HEK293T (cell line): ENCODE measurements at regions of chr10 and their contacts with region 1.

Region 1: GRCh38 chr10:60358282-60358681 is 31.4 kb downstream of the ANK3 start:
- DNase-seq: no peak

Region 2: DNA sequence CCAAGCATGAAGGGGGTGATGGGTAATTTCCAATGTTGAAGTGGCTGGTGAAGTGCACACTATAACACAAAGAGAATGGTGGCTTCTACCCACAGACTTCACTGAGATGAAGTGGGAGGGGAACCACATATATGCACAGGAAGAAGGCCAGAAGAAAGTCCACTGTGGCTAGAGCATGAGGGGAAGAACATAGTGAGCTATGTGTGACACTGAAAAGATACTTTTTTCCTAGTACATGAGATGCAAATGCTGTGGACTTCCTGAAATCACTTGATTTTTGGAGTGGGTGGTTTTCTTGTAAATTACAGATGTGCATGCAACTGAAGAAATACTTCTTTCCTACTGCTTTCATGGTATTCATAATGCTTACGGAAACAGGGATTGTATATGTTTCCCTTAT is 1297.4 kb before region 1 on chr10:
- CTCF ChIA-PET with region 1: interaction called, 10 read pairs
- POLR2A ChIA-PET with region 1: no interaction called
- DNase-seq: no peak

Region 3: DNA sequence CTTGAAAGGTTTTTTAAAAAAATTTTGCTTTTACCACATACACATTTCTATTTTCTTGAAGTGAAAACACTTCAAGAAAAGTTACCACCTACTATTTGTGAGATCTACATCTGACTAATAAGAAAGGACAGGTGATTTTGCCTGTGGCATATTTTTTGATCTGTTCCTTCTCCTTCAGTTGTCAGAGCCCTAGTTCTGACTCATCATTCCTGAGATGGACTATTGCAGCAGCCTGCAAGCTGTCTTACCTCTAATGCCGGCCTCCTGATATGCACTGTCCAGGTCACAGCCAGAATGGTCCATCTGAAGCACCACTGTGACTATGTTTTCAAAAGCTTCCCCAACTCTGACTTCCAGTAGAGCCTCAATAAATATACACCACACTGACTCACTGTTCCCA is 59.6 kb after region 1 on chr10:
- CTCF ChIA-PET with region 1: no interaction called
- POLR2A ChIA-PET with region 1: no interaction called
- DNase-seq: no peak